A549 (cell line): ENCODE measurements at regions of chr10 and their contacts with region 1.

Region 1: DNA sequence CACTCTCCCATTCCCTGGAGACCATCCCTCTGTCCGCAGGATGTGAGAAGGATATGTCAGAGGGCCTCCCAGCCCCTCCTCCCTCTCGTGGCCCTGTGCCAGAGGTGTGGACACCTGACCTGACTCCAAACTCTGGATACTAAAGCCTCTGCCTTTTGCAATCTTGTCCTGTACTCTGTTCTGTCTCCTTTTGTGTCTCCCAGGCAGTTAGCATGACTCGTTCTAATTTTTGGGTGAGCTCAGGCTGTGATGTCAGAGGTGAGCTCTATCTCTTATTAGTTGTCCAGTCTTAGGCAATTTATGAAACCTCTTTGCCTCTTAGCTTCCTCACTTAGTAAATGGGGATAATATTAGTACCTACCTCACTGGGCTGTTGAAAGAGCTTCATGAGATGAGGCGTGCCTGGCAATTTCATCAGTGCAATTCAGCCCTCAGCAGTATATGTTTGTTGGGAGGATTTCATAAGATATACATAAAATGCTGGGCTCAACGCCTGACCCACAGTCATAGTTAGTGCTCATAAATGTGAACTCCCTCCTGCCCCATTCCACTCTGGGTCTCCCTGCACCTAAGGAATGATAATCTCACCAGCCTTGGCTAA is 10.9 kb downstream of the MARVELD1 start:
- DNase-seq: peak in 1 of 2 experiments; percentile 50
- ATAC-seq: peak; percentile 60 to 81
- H3K4me3 ChIP-seq: no peak overlapping the region
- H3K27ac ChIP-seq: peak overlapping the region; percentile 43 to 45; a peak in 4 of 6 replicates
- H3K4me1 ChIP-seq: peaks cover 27% of the 10 kb centered on the region
- CTCF ChIP-seq: no peak
- EP300 ChIP-seq: no peak
- POLR2A ChIP-seq: no peak
- RAD21 ChIP-seq: no peak

Region 2: DNA sequence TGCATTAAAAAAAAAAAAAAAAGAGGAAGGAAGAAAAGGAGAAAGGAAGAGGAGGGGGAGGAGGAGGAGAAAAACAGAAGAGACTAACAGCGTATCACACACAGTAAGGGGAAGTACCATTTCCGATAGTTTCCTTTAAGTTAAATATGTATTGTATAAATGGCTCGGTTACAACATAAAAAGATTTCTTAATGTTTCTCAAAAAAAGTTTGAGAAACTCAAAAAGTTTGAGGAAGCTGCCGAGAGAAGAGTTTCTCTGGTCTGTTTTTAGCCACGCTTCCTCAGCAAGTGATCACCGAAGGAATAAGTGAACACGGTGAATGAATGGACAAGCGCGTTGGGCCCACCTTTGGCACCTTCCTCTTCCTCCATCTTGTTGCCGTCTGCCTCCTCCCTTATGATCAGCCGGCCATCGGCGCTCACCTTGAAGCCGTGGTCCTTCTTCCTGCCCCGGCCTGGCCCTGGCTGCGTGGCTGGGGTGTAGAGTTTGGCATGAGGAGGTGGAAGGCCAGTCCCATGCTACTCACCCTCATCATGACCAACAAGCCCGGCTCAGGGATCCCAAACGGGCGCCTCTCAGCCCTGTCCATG is 358.6 kb before region 1 on chr10:
- CTCF ChIA-PET with region 1: no interaction called
- POLR2A ChIA-PET with region 1: no interaction called
- DNase-seq: no peak
- ATAC-seq: no peak
- H3K4me3 ChIP-seq: no peak overlapping the region
- H3K27ac ChIP-seq: no peak overlapping the region
- H3K4me1 ChIP-seq: no peaks in the 10 kb centered on the region
- CTCF ChIP-seq: no peak
- EP300 ChIP-seq: no peak
- POLR2A ChIP-seq: no peak
- RAD21 ChIP-seq: no peak

Region 3: GRCh38 chr10:97736902-97737769 is 12.7 kb after region 1 on chr10 and contains the start of gene ZFYVE27:
- CTCF ChIA-PET with region 1: interaction called, 1,006 read pairs
- POLR2A ChIA-PET with region 1: interaction called, 15 read pairs
- DNase-seq: peak; percentile 96 to 98
- ATAC-seq: peak; percentile 78 to 91
- H3K4me3 ChIP-seq: peak within 1 kb of the TSS; percentile 86
- H3K27ac ChIP-seq: peak within 1 kb of the TSS; percentile 86 to 98
- H3K4me1 ChIP-seq: peaks cover 9% of the 10 kb centered on the region; the same call in 2 of the 3 replicates
- CTCF ChIP-seq: no peak
- EP300 ChIP-seq: no peak
- POLR2A ChIP-seq: peak; percentile 91
- RAD21 ChIP-seq: no peak
- polyA plus RNA-seq, gene ZFYVE27: 17.1 and 20.2 TPM in 2 replicates

Region 4: GRCh38 chr10:97780841-97781617 is 56.6 kb after region 1 on chr10:
- CTCF ChIA-PET with region 1: no interaction called
- POLR2A ChIA-PET with region 1: no interaction called
- DNase-seq: no peak
- ATAC-seq: peak; percentile 45 to 57; a peak in 4 of 6 replicates
- H3K4me3 ChIP-seq: no peak overlapping the region
- H3K27ac ChIP-seq: peak overlapping the region in 1 of 2 experiments; percentile 27; a peak in 1 of 6 replicates
- H3K4me1 ChIP-seq: no peaks in the 10 kb centered on the region
- CTCF ChIP-seq: no peak
- EP300 ChIP-seq: no peak
- POLR2A ChIP-seq: no peak
- RAD21 ChIP-seq: no peak

Region 5: DNA sequence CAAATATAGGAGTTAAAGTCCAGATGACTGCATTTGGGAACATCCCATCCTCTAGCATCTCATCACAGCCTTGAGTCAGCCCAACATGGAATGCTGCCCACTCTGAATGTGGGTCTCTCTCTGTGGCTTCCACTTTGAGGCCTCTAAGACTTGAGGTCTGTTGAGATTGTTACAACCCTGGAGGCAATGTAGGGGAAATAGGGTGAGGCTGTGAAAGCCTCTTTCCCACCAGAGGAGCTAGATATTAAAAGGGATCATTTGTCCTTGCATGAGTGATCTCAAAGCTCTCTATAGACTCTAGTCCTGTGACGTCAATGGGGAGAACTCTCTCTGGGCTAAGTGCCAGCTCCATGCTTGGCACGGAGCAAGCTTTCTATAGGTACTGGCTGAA is 118.8 kb after region 1 on chr10:
- CTCF ChIA-PET with region 1: no interaction called
- POLR2A ChIA-PET with region 1: no interaction called
- DNase-seq: peak in 1 of 2 experiments; percentile 71
- ATAC-seq: peak; percentile 69 to 70
- H3K4me3 ChIP-seq: no peak overlapping the region
- H3K27ac ChIP-seq: peak overlapping the region; percentile 42 to 64; a peak in 5 of 6 replicates
- H3K4me1 ChIP-seq: peaks cover 32% of the 10 kb centered on the region
- CTCF ChIP-seq: no peak
- EP300 ChIP-seq: no peak
- POLR2A ChIP-seq: no peak
- RAD21 ChIP-seq: no peak